SK-N-SH (cell line): ENCODE measurements at regions of chr10 and their contacts with region 1.

Region 1: GRCh38 chr10:84147347-84147746 is 8.0 kb downstream of the GHITM start:
- DNase-seq: no peak
- H3K4me3 ChIP-seq: no peak overlapping the region
- H3K27ac ChIP-seq: no peak overlapping the region
- H3K4me1 ChIP-seq: no peaks in the 10 kb centered on the region
- H3K27me3 ChIP-seq: no peaks in the 10 kb centered on the region
- CTCF ChIP-seq: no peak
- EP300 ChIP-seq: no peak
- RAD21 ChIP-seq: no peak

Region 2: GRCh38 chr10:83961620-83962019 is 185.7 kb before region 1 on chr10:
- CTCF ChIA-PET with region 1: no interaction called
- POLR2A ChIA-PET with region 1: no interaction called
- DNase-seq: peak; percentile 37
- H3K4me3 ChIP-seq: no peak overlapping the region
- H3K27ac ChIP-seq: no peak overlapping the region
- H3K4me1 ChIP-seq: no peaks in the 10 kb centered on the region; a peak in 1 of 4 replicates
- H3K27me3 ChIP-seq: no peaks in the 10 kb centered on the region
- CTCF ChIP-seq: no peak
- EP300 ChIP-seq: no peak
- RAD21 ChIP-seq: peak; percentile 73

Region 3: GRCh38 chr10:84163996-84164395 is 16.6 kb after region 1 on chr10:
- CTCF ChIA-PET with region 1: interaction called, 27 read pairs
- POLR2A ChIA-PET with region 1: no interaction called
- DNase-seq: no peak
- H3K4me3 ChIP-seq: no peak overlapping the region
- H3K27ac ChIP-seq: no peak overlapping the region
- H3K4me1 ChIP-seq: no peaks in the 10 kb centered on the region
- H3K27me3 ChIP-seq: no peaks in the 10 kb centered on the region
- CTCF ChIP-seq: no peak
- EP300 ChIP-seq: no peak
- RAD21 ChIP-seq: no peak

Region 4: DNA sequence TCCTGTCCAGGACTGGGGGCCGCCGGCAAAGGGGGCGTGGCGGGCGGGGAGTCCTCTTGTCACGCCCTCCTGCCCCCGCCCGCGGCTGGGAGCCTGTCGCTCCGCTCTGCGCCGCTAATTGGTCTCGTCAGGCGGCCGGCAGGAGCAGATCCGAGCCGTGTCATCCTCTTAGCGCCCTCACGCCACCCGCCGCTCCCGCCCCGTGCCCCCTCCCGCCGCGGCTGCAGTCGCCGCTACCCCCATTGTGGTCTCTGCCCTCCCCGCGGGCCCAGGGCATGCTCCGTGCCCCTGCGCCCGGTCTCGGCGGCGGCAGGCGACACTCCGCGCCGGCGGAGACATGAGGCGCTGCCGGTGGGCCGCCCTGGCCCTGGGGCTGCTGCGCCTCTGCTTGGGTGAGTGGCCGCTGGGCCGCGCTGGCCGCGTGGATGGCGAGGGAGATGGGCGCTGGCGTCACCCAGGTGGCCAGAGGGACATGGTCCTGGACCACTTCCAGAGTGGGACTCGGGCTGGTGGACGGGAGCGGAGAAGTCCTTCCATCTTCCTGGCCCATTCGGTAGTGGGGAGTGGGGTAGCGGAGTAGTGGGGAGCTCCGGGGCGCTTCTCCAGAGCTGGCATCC is 47.2 kb after region 1 on chr10 and contains the start of gene CDHR1:
- CTCF ChIA-PET with region 1: interaction called, 13 read pairs
- POLR2A ChIA-PET with region 1: no interaction called
- DNase-seq: peak; percentile 86
- H3K4me3 ChIP-seq: peak within 1 kb of the TSS; percentile 42 to 47
- H3K27ac ChIP-seq: no peak within 1 kb of the TSS
- H3K4me1 ChIP-seq: peaks cover 0 to 11% of the 10 kb centered on the region in 2 experiments; a peak in 1 of 4 replicates
- H3K27me3 ChIP-seq: no peaks in the 10 kb centered on the region
- CTCF ChIP-seq: no peak
- EP300 ChIP-seq: no peak
- RAD21 ChIP-seq: no peak
- polyA plus RNA-seq, gene CDHR1: 0.02 and 0.05 TPM in 2 replicates

Region 5: GRCh38 chr10:84205049-84205852 is 57.9 kb after region 1 on chr10:
- CTCF ChIA-PET with region 1: interaction called, 72 read pairs
- POLR2A ChIA-PET with region 1: no interaction called
- DNase-seq: peak; percentile 83
- H3K4me3 ChIP-seq: peak overlapping the region in 1 of 2 experiments; percentile 17; a peak in 1 of 4 replicates
- H3K27ac ChIP-seq: no peak overlapping the region
- H3K4me1 ChIP-seq: no peaks in the 10 kb centered on the region
- H3K27me3 ChIP-seq: no peaks in the 10 kb centered on the region
- CTCF ChIP-seq: peak; percentile 69
- EP300 ChIP-seq: no peak
- RAD21 ChIP-seq: peak; percentile 83